CD4-positive, alpha-beta memory T cell (primary cell): ENCODE measurements at regions of chr5 and their contacts with region 1.

Region 1: DNA sequence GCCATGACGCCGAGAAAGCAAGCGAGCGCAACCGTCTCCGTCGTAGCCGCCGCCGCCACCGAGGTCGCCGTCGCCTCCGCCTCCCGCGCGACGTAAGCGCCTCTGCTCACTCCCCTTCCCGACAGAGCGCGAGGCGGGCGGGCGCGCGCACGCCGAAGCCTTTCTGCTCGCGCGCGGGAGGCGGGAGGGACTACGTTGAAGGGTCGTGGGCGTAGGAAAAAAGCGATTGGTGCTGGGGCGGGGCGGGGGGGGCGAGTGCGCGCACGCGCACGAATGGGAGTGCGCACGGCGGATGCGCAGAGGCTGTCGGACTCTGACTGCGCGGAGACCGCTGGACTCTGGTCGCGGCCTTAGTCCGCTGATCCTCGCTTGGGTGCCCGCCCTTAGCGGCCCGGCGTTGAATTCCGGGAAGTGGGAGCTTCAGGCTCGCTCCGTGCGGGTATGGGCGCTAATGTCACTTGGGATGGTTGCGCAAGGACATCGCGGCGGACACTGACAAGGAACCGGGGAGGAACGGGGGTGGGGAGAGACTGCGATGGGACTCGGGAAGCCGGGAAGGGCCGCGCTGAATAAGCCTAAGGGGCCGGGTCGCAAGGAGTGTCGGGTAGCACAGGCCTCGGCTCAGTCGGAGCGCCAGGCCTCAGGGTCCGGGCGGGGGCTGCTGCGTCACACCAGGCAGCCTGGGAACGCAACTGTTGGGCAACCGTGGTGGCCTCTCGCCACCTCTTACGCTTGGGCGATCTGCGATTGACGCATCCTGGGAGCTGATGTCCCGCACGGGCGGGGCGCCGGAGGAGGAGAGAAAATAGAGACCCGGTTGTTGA is at the start of gene CHD1:
- DNase-seq: peak; percentile 94 to 99 (median 98)
- H3K4me3 ChIP-seq: peak within 1 kb of the TSS; percentile 48 to 84
- H3K4me3 Mint-ChIP-seq: peak within 1 kb of the TSS; percentile 93 to 99 (median 98)
- H3K27ac ChIP-seq: peak within 1 kb of the TSS; percentile 100
- H3K27ac Mint-ChIP-seq: peak within 1 kb of the TSS; percentile 99 to 100 (median 100)
- H3K4me1 ChIP-seq: peaks cover 72% of the 10 kb centered on the region
- H3K4me1 Mint-ChIP-seq: peaks cover 45 to 90% (median 55%) of the 10 kb centered on the region in 4 donors
- H3K27me3 ChIP-seq: no peaks in the 10 kb centered on the region
- H3K27me3 Mint-ChIP-seq: no peaks in the 10 kb centered on the region
- total RNA-seq, gene CHD1: 91.2 to 93.9 TPM

Region 2: GRCh38 chr5:98773464-98774191 is 155.5 kb before region 1 on chr5 and contains the start of gene RGMB:
- CTCF ChIA-PET with region 1: no interaction called
- POLR2A ChIA-PET with region 1: interaction called, 9 read pairs
- intact Hi-C with region 1: loop called (anchors 1 kb)
- DNase-seq: peak; percentile 87 to 95 (median 89)
- H3K4me3 ChIP-seq: peak within 1 kb of the TSS; percentile 71 to 73
- H3K4me3 Mint-ChIP-seq: peak within 1 kb of the TSS; percentile 94 to 99 (median 98)
- H3K27ac ChIP-seq: peak within 1 kb of the TSS; percentile 59
- H3K27ac Mint-ChIP-seq: peak within 1 kb of the TSS; percentile 89 to 98 (median 94)
- H3K4me1 ChIP-seq: peaks cover 48% of the 10 kb centered on the region
- H3K4me1 Mint-ChIP-seq: peaks cover 34 to 70% (median 50%) of the 10 kb centered on the region in 4 donors
- H3K27me3 ChIP-seq: peaks cover 5% of the 10 kb centered on the region
- H3K27me3 Mint-ChIP-seq: peaks cover 2 to 3% of the 10 kb centered on the region in 2 donors
- total RNA-seq, gene RGMB: 16.5 to 17.0 TPM

Region 3: GRCh38 chr5:98880151-98880550 is 48.9 kb before region 1 on chr5:
- CTCF ChIA-PET with region 1: no interaction called
- POLR2A ChIA-PET with region 1: no interaction called
- intact Hi-C with region 1: no loop called
- DNase-seq: no peak
- H3K4me3 ChIP-seq: no peak overlapping the region
- H3K4me3 Mint-ChIP-seq: no peak overlapping the region
- H3K27ac ChIP-seq: no peak overlapping the region
- H3K27ac Mint-ChIP-seq: peak overlapping the region in 3 of 7 donors; percentile 10 to 74 (median 19)
- H3K4me1 ChIP-seq: no peaks in the 10 kb centered on the region
- H3K4me1 Mint-ChIP-seq: peaks cover 4 to 9% (median 6%) of the 10 kb centered on the region in 4 donors
- H3K27me3 ChIP-seq: no peaks in the 10 kb centered on the region
- H3K27me3 Mint-ChIP-seq: no peaks in the 10 kb centered on the region

Region 4: GRCh38 chr5:98940581-98940980 is 11.5 kb after region 1 on chr5:
- CTCF ChIA-PET with region 1: no interaction called
- POLR2A ChIA-PET with region 1: interaction called, 29 read pairs
- intact Hi-C with region 1: no loop called
- DNase-seq: no peak
- H3K4me3 ChIP-seq: no peak overlapping the region
- H3K4me3 Mint-ChIP-seq: no peak overlapping the region
- H3K27ac ChIP-seq: no peak overlapping the region
- H3K27ac Mint-ChIP-seq: peak overlapping the region in 5 of 7 donors; percentile 14 to 83 (median 32)
- H3K4me1 ChIP-seq: peaks cover 18% of the 10 kb centered on the region
- H3K4me1 Mint-ChIP-seq: peaks cover 25 to 60% (median 41%) of the 10 kb centered on the region in 4 donors
- H3K27me3 ChIP-seq: no peaks in the 10 kb centered on the region
- H3K27me3 Mint-ChIP-seq: no peaks in the 10 kb centered on the region

Region 5: GRCh38 chr5:99032234-99033013 is 103.3 kb after region 1 on chr5:
- CTCF ChIA-PET with region 1: interaction called, 8 read pairs
- POLR2A ChIA-PET with region 1: interaction called, 144 read pairs
- intact Hi-C with region 1: loop called (anchors 1 kb)
- DNase-seq: peak in 3 of 5 donors; percentile 18 to 21 (median 19)
- H3K4me3 ChIP-seq: peak overlapping the region in 1 of 2 donors; percentile 33
- H3K4me3 Mint-ChIP-seq: peak overlapping the region; percentile 82 to 92 (median 88)
- H3K27ac ChIP-seq: peak overlapping the region; percentile 71
- H3K27ac Mint-ChIP-seq: peak overlapping the region; percentile 90 to 99 (median 98)
- H3K4me1 ChIP-seq: peaks cover 69% of the 10 kb centered on the region
- H3K4me1 Mint-ChIP-seq: peaks cover 58 to 89% (median 71%) of the 10 kb centered on the region in 4 donors
- H3K27me3 ChIP-seq: no peaks in the 10 kb centered on the region
- H3K27me3 Mint-ChIP-seq: no peaks in the 10 kb centered on the region

Region 6: GRCh38 chr5:99054972-99055371 is 125.9 kb after region 1 on chr5:
- CTCF ChIA-PET with region 1: interaction called, 26 read pairs
- POLR2A ChIA-PET with region 1: interaction called, 69 read pairs
- intact Hi-C with region 1: loop called (anchors 1 kb)
- DNase-seq: peak in 3 of 5 donors; percentile 15 to 38 (median 32)
- H3K4me3 ChIP-seq: no peak overlapping the region
- H3K4me3 Mint-ChIP-seq: peak overlapping the region in 3 of 8 donors; percentile 46 to 49 (median 47)
- H3K27ac ChIP-seq: no peak overlapping the region
- H3K27ac Mint-ChIP-seq: peak overlapping the region; percentile 29 to 87 (median 64)
- H3K4me1 ChIP-seq: no peaks in the 10 kb centered on the region
- H3K4me1 Mint-ChIP-seq: peaks cover 6 to 19% (median 13%) of the 10 kb centered on the region in 4 donors
- H3K27me3 ChIP-seq: no peaks in the 10 kb centered on the region
- H3K27me3 Mint-ChIP-seq: no peaks in the 10 kb centered on the region

Region 7: DNA sequence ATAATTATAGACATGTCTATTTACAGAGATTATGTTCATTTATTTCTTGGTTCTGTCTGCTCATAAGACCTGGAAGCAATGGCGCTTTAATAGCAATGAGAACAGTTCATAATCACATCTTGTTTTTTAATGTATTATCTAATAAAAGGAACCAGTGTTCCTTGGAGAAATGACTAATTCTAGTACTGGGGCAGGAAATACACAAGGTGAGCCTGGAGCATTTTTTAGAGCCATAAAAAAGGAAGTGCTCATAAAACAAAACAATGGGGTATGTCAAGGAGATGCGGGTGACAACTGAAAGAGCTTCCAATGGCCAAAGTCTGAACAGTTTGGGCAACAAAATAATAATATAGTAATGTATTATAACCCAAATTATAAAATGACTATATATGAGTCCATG is 531.6 kb after region 1 on chr5:
- CTCF ChIA-PET with region 1: no interaction called
- POLR2A ChIA-PET with region 1: no interaction called
- intact Hi-C with region 1: no loop called
- DNase-seq: no peak
- H3K4me3 ChIP-seq: no peak overlapping the region
- H3K4me3 Mint-ChIP-seq: no peak overlapping the region
- H3K27ac ChIP-seq: no peak overlapping the region
- H3K27ac Mint-ChIP-seq: no peak overlapping the region
- H3K4me1 ChIP-seq: no peaks in the 10 kb centered on the region
- H3K4me1 Mint-ChIP-seq: no peaks in the 10 kb centered on the region
- H3K27me3 ChIP-seq: no peaks in the 10 kb centered on the region
- H3K27me3 Mint-ChIP-seq: no peaks in the 10 kb centered on the region

Region 8: DNA sequence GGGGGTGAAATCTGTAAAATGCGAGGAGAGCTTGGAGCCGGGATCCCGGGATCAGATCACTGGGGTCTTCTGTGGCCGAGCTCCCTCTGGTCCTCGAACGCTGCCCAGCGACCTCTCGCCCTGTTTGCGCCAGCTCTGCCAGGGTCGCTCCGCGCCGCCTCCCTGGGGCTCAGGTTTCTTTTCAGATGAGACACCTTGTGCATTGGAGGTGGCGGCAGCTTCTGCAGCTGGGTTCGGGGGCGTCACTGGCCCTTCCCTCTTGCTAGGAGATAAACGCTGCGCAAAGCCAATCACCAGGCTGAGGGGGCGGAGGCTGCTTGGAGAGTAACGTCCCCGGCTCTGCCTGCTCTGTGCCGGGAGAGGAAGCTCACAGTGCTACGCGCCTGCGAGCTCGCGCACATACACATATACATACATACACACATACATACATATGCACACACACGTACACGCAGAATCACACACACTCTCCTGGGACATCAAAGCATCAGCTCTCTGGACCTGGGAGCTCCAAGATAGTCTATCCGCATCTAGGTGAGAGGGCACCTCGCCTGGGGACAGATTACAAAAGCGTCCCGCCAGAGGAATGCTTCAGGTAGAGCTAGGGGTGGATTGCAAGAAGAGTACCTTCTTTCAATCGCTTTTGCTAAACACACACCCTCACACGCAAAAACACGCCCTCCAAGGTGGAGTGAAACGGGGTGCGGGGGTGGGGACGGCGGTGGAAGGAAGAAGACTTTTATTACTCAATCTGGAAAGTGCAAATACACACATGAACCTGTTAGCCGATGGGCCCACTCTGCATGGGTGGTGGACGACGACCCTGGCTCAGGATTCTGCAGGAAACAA is 1974.2 kb after region 1 on chr5 and contains the start of gene ST8SIA4:
- CTCF ChIA-PET with region 1: no interaction called
- POLR2A ChIA-PET with region 1: interaction called, 13 read pairs
- intact Hi-C with region 1: loop called (anchors 1 kb)
- DNase-seq: peak; percentile 86 to 97 (median 89)
- H3K4me3 ChIP-seq: peak within 1 kb of the TSS; percentile 88 to 89
- H3K4me3 Mint-ChIP-seq: peak within 1 kb of the TSS; percentile 89 to 100 (median 96)
- H3K27ac ChIP-seq: peak within 1 kb of the TSS; percentile 91
- H3K27ac Mint-ChIP-seq: peak within 1 kb of the TSS; percentile 97 to 98 (median 98)
- H3K4me1 ChIP-seq: peaks cover 34% of the 10 kb centered on the region
- H3K4me1 Mint-ChIP-seq: peaks cover 26 to 70% (median 42%) of the 10 kb centered on the region in 4 donors
- H3K27me3 ChIP-seq: no peaks in the 10 kb centered on the region
- H3K27me3 Mint-ChIP-seq: no peaks in the 10 kb centered on the region
- total RNA-seq, gene ST8SIA4: 27.7 to 28.7 TPM